CD4-positive, alpha-beta T cell (primary cell): ENCODE measurements at regions of chr11 and their contacts with region 1.

Region 1: DNA sequence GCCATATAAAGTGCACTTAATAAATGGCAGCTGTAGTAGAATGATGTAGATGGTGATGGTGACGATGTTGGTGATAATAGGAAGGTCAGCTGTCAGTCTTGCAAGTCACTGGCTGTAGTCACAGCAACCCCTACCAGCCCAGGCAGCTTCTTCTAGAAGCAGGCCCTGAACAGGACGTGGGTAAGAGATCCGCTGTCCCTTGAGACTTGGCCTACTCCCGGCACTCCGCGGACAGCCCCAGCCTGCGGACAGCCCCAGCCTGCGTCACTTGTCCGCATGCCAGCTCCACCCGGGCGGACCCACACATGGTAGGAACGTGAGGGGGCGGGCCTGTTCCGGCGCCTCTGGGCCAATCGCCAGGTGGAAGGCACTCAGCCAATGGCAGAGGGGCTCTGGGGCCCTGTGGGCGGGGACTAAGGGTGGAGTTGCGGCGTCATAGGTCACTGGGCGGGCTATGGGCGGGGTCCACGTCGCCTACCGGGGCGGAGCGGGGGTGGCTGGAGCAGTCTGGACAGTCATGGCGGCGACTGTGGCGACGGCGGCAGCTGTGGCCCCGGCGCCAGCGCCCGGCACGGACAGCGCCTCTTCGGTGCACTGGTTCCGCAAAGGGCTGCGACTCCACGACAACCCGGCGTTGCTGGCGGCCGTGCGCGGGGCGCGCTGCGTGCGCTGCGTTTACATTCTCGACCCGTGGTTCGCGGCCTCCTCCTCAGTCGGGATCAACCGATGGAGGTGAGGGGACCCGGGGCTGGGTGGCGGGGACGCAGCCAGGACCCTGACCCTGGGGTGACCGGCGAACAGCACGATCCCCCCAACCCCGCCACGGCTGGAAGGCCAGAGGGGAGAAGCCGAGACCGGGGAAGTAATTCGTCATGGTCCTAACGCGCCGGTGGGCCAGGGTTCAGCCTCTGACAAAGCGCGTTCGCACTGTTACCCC is at the start of gene CRY2:
- DNase-seq: peak; percentile 95 to 99 (median 98)
- ATAC-seq: peak; percentile 77
- H3K4me3 ChIP-seq: peak within 1 kb of the TSS; percentile 94
- H3K4me3 Mint-ChIP-seq: peak within 1 kb of the TSS; percentile 96
- H3K27ac ChIP-seq: peak within 1 kb of the TSS; percentile 91 to 93
- H3K27ac Mint-ChIP-seq: peak within 1 kb of the TSS; percentile 100
- H3K4me1 ChIP-seq: peaks cover 41% of the 10 kb centered on the region
- H3K4me1 Mint-ChIP-seq: peaks cover 70% of the 10 kb centered on the region
- H3K27me3 ChIP-seq: no peaks in the 10 kb centered on the region
- H3K27me3 Mint-ChIP-seq: no peaks in the 10 kb centered on the region
- CTCF ChIP-seq: no peak
- total RNA-seq, gene CRY2: 248 TPM

Region 2: GRCh38 chr11:45804761-45805304 is 42.4 kb before region 1 on chr11 and contains the start of gene SLC35C1:
- CTCF ChIA-PET with region 1: no interaction called
- POLR2A ChIA-PET with region 1: interaction called, 9 read pairs
- intact Hi-C with region 1: loop called (anchors 1 kb)
- DNase-seq: peak; percentile 90 to 98 (median 96)
- ATAC-seq: peak; percentile 94
- H3K4me3 ChIP-seq: peak within 1 kb of the TSS; percentile 99
- H3K4me3 Mint-ChIP-seq: peak within 1 kb of the TSS; percentile 94
- H3K27ac ChIP-seq: peak within 1 kb of the TSS; percentile 76 to 79
- H3K27ac Mint-ChIP-seq: peak within 1 kb of the TSS; percentile 76
- H3K4me1 ChIP-seq: peaks cover 54% of the 10 kb centered on the region
- H3K4me1 Mint-ChIP-seq: peaks cover 53% of the 10 kb centered on the region
- H3K27me3 ChIP-seq: no peaks in the 10 kb centered on the region
- H3K27me3 Mint-ChIP-seq: no peaks in the 10 kb centered on the region
- CTCF ChIP-seq: no peak
- total RNA-seq, gene SLC35C1: 4.4 to 4.9 TPM

Region 3: DNA sequence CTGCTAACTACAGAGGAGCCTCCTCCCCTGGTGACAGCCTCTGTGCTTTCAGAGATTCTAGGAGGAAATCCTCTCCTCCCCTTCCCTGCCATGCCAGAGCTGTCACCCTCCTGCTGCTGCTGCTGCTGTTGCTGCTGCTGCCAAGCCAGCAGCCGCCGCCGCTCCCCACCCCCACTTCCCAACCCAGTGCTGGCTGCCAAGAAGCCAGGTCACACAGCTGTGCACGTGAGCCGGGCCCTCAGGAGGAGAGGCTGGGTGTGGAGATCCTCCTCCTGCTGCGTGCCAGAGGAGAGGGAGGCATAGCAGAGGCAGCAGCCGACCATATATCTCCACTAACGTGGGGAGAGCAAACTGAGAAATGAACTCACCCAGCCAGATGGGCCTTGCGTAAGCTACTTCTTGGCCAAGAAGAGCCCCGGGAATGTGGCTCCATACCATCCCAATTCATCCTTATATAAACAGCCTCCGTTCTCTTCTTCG is 12.5 kb after region 1 on chr11:
- CTCF ChIA-PET with region 1: no interaction called
- POLR2A ChIA-PET with region 1: no interaction called
- intact Hi-C with region 1: no loop called
- DNase-seq: no peak
- ATAC-seq: no peak
- H3K4me3 ChIP-seq: no peak overlapping the region
- H3K4me3 Mint-ChIP-seq: no peak overlapping the region
- H3K27ac ChIP-seq: no peak overlapping the region
- H3K27ac Mint-ChIP-seq: no peak overlapping the region
- H3K4me1 ChIP-seq: no peaks in the 10 kb centered on the region
- H3K4me1 Mint-ChIP-seq: no peaks in the 10 kb centered on the region
- H3K27me3 ChIP-seq: no peaks in the 10 kb centered on the region
- H3K27me3 Mint-ChIP-seq: no peaks in the 10 kb centered on the region
- CTCF ChIP-seq: no peak

Region 4: GRCh38 chr11:45885274-45885920 is 38.2 kb after region 1 on chr11 and contains the start of gene MAPK8IP1:
- CTCF ChIA-PET with region 1: no interaction called
- POLR2A ChIA-PET with region 1: no interaction called
- intact Hi-C with region 1: loop called in 1 of 2 experiments (anchors 2 kb)
- DNase-seq: peak; percentile 14 to 83 (median 46)
- ATAC-seq: peak; percentile 74
- H3K4me3 ChIP-seq: peak within 1 kb of the TSS; percentile 41
- H3K4me3 Mint-ChIP-seq: peak within 1 kb of the TSS; percentile 81
- H3K27ac ChIP-seq: no peak within 1 kb of the TSS
- H3K27ac Mint-ChIP-seq: peak within 1 kb of the TSS; percentile 77
- H3K4me1 ChIP-seq: peaks cover 13% of the 10 kb centered on the region
- H3K4me1 Mint-ChIP-seq: peaks cover 11% of the 10 kb centered on the region
- H3K27me3 ChIP-seq: no peaks in the 10 kb centered on the region
- H3K27me3 Mint-ChIP-seq: peaks cover 5% of the 10 kb centered on the region
- CTCF ChIP-seq: no peak
- total RNA-seq, gene MAPK8IP1: 2.3 to 2.4 TPM

Region 5: GRCh38 chr11:46006418-46007070 is 159.3 kb after region 1 on chr11:
- CTCF ChIA-PET with region 1: interaction called, 3 read pairs
- POLR2A ChIA-PET with region 1: no interaction called
- intact Hi-C with region 1: loop called (anchors 1 to 5 kb)
- DNase-seq: peak in 5 of 14 experiments; percentile 13 to 77 (median 74)
- ATAC-seq: peak; percentile 76
- H3K4me3 ChIP-seq: no peak overlapping the region
- H3K4me3 Mint-ChIP-seq: no peak overlapping the region
- H3K27ac ChIP-seq: no peak overlapping the region
- H3K27ac Mint-ChIP-seq: no peak overlapping the region
- H3K4me1 ChIP-seq: no peaks in the 10 kb centered on the region
- H3K4me1 Mint-ChIP-seq: peaks cover 4% of the 10 kb centered on the region
- H3K27me3 ChIP-seq: no peaks in the 10 kb centered on the region
- H3K27me3 Mint-ChIP-seq: no peaks in the 10 kb centered on the region
- CTCF ChIP-seq: peak; percentile 85